Naive thymus-derived CD4-positive, alpha-beta T cell (primary cell): ENCODE measurements at regions of chr6 and their contacts with region 1.

Region 1: GRCh38 chr6:40436685-40437604 is 150.2 kb downstream of the LRFN2 start:
- DNase-seq: peak in 1 of 9 donors; percentile 39
- ATAC-seq: peak; percentile 73
- H3K4me3 ChIP-seq: no peak overlapping the region
- H3K4me3 Mint-ChIP-seq: peak overlapping the region in 1 of 10 donors; percentile 75
- H3K27ac ChIP-seq: no peak overlapping the region
- H3K27ac Mint-ChIP-seq: peak overlapping the region in 1 of 9 donors; percentile 83
- H3K4me1 ChIP-seq: peaks cover 0 to 8% of the 10 kb centered on the region in 2 donors
- H3K4me1 Mint-ChIP-seq: peaks cover 0 to 45% (median 0%) of the 10 kb centered on the region in 7 donors
- H3K27me3 ChIP-seq: no peaks in the 10 kb centered on the region
- H3K27me3 Mint-ChIP-seq: peaks cover 0 to 5% (median 0%) of the 10 kb centered on the region in 5 donors

Region 2: DNA sequence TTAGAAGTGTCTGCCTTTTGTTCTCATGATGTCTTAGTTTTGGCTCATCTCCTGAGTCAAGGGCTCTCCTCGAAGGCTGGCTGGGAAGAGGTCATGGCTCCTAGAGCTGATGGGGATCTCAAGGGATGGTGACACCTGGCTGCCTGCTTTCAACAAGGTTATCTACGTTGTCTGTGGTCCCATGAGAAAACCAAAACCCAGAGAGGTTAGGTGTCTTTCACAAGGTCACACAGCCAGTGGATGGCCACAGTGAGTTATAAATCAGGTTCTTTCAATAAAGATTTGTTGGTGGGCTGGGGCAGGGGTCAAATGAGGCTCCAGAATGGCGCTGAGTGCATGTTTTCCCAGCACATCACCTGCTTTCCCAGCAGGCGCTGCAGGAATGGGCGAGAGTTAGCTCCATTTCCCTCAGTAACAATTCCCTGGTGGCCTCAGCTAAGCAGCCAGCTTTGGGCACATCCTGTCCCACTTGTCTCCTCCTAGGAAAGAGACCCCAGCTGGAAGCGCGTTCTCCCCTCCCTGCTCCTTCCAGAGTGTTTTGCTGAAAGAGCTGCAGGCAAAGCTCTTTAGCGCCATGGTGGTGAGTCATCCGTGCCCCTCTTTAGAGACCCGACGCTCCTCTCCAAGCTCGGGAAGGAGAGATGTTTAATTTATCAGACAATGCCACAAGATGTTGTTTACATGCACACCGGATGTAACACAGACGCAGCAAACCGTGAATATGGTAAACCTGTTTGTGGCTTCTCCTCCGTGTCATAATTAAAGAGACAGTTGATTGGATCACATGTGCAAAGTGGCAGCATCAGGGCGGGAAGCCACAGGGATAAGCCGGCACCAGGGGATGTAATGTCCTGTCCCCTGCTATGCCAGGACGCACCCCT is 40.5 kb after region 1 on chr6:
- CTCF ChIA-PET with region 1: no interaction called
- POLR2A ChIA-PET with region 1: no interaction called
- intact Hi-C with region 1: loop called in 1 of 2 experiments (anchors 5 kb)
- DNase-seq: peak in 6 of 9 donors; percentile 23 to 48 (median 38)
- ATAC-seq: peak; percentile 78
- H3K4me3 ChIP-seq: no peak overlapping the region
- H3K4me3 Mint-ChIP-seq: peak overlapping the region in 4 of 10 donors; percentile 41 to 70 (median 52)
- H3K27ac ChIP-seq: no peak overlapping the region
- H3K27ac Mint-ChIP-seq: peak overlapping the region in 7 of 9 donors; percentile 10 to 82 (median 69)
- H3K4me1 ChIP-seq: peaks cover 0 to 16% of the 10 kb centered on the region in 2 donors
- H3K4me1 Mint-ChIP-seq: peaks cover 0 to 37% (median 0%) of the 10 kb centered on the region in 7 donors
- H3K27me3 ChIP-seq: no peaks in the 10 kb centered on the region
- H3K27me3 Mint-ChIP-seq: peaks cover 0 to 19% (median 0%) of the 10 kb centered on the region in 5 donors